ENCODE measurements at regions of chr9 and their contacts with region 1.

Region 1: DNA sequence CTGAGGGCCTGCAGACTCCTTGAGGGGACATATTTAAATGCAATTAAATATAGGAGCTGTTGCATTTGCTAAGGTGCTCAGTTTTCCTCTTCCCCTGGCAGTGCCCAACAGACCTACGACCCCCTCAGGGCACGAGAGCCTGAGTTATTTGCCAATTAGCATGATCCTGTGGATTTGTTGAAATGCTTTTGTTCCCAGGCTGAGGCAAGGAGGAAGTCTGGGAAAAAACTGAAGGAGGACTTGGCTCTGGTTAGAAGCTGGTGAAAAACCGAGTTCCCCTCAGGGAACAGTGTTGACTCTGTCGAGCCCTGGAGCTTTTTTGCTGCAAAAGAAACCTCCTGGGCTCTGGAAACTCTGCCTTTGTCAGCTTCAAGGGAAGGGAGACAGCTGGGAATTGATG is 103.6 kb upstream of the SHB start:
- DNase-seq: no peak
- ATAC-seq: no peak
- H3K4me3 Mint-ChIP-seq: no peak overlapping the region
- H3K27ac Mint-ChIP-seq: no peak overlapping the region
- H3K4me1 Mint-ChIP-seq: peaks cover 1% of the 10 kb centered on the region
- H3K27me3 Mint-ChIP-seq: peaks cover 3% of the 10 kb centered on the region

Region 2: DNA sequence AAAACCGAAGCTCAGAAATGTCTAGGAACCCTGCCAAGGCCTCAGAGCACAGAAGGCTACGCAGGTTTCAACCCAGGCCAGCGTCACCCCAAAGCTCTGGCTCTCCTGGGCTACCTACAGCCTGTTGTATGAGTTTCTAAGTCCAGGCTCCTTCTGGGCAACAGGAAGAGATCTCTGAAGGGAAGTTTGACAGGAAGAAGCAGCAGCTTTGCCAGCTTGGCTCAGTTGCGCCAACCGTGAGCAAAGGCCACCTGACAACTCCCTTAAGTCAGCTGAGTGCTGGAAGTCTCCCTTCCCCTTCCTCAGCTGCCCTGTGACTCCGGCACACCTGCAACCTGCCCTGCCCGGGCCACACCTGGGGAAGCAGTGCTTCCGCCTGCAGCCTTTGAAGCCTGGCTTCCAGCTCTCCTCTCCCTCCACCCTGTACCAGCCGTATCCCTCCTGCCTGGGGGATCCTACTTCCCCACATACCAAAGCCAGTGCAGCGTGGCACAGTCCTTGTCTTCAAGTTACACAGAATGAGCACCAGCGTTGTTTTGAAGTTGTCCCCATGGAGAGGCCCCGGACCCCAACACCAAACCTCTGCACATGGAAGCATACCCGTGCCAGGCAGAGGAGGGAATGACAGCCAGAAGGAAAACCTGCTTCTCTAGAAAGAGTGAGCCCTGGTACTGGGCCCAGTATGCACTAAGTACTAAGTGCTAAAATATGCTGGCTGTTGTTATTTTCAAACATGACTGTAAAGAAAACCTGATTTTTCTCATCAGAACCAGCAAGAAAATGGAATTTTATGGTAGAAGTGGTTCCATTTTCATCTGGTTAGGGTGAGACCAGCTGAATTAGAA is 140.1 kb before region 1 on chr9:
- CTCF ChIA-PET with region 1: no interaction called
- POLR2A ChIA-PET with region 1: no interaction called
- intact Hi-C with region 1: loop called in 1 of 2 experiments (anchors 5 kb)
- DNase-seq: no peak
- ATAC-seq: no peak
- H3K4me3 Mint-ChIP-seq: no peak overlapping the region
- H3K27ac Mint-ChIP-seq: no peak overlapping the region
- H3K4me1 Mint-ChIP-seq: peaks cover 7% of the 10 kb centered on the region
- H3K27me3 Mint-ChIP-seq: no peaks in the 10 kb centered on the region

Region 3: GRCh38 chr9:38186377-38187265 is 14.0 kb after region 1 on chr9:
- CTCF ChIA-PET with region 1: no interaction called
- POLR2A ChIA-PET with region 1: no interaction called
- intact Hi-C with region 1: loop called in 1 of 2 experiments (anchors 2 kb)
- DNase-seq: no peak
- ATAC-seq: no peak
- H3K4me3 Mint-ChIP-seq: no peak overlapping the region
- H3K27ac Mint-ChIP-seq: no peak overlapping the region
- H3K4me1 Mint-ChIP-seq: no peaks in the 10 kb centered on the region
- H3K27me3 Mint-ChIP-seq: no peaks in the 10 kb centered on the region